CD4-positive, alpha-beta memory T cell (primary cell): ENCODE measurements at regions of chr10 and their contacts with region 1.

Region 1: DNA sequence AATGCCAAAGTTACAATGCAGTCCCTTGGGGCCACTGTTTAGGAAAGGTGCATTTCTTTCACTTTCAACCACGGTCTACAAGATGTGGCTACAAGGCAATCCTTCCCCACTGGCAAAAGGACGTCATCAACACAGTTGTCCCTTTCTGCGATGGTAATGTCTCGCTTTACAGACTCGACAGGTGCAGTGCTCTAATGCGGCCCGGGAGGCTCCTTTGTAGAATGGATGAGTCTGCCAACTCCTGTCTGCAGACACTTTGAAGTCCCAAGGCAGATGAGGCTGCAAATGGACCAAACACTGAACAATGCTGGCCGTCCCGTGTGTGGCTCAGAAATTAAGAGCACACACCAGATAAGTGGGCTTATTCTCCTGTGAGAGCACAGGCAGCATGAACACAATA is 133.7 kb downstream of the PIP4K2A start:
- DNase-seq: no peak
- H3K4me3 ChIP-seq: no peak overlapping the region
- H3K4me3 Mint-ChIP-seq: no peak overlapping the region
- H3K27ac ChIP-seq: no peak overlapping the region
- H3K27ac Mint-ChIP-seq: peak overlapping the region in 3 of 7 donors; percentile 6 to 47 (median 41)
- H3K4me1 ChIP-seq: peaks cover 3% of the 10 kb centered on the region
- H3K4me1 Mint-ChIP-seq: peaks cover 23 to 60% (median 45%) of the 10 kb centered on the region in 4 donors
- H3K27me3 ChIP-seq: no peaks in the 10 kb centered on the region
- H3K27me3 Mint-ChIP-seq: no peaks in the 10 kb centered on the region

Region 2: DNA sequence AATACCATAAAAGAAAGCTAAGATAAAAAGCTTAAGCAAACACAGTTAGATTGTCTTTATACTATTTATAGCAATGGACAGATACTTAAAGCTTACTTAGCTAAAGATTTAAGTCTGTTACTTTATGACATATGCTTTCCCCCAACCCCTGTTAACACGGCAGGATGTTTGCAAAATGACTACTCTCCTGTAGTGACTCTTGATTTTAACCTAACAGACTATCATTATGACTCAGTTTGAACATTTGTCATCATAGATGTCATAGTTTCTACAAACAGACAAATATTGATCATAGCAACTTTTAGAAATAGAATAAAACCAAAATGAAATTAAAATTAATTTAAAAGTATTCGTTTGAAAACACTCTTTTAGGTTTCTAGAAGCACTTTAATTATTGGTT is 272.3 kb before region 1 on chr10:
- CTCF ChIA-PET with region 1: no interaction called
- POLR2A ChIA-PET with region 1: no interaction called
- intact Hi-C with region 1: no loop called
- DNase-seq: no peak
- H3K4me3 ChIP-seq: no peak overlapping the region
- H3K4me3 Mint-ChIP-seq: no peak overlapping the region
- H3K27ac ChIP-seq: no peak overlapping the region
- H3K27ac Mint-ChIP-seq: no peak overlapping the region
- H3K4me1 ChIP-seq: no peaks in the 10 kb centered on the region
- H3K4me1 Mint-ChIP-seq: no peaks in the 10 kb centered on the region
- H3K27me3 ChIP-seq: no peaks in the 10 kb centered on the region
- H3K27me3 Mint-ChIP-seq: peaks cover 0 to 4% of the 10 kb centered on the region in 2 donors

Region 3: GRCh38 chr10:22475651-22476600 is 104.8 kb before region 1 on chr10:
- CTCF ChIA-PET with region 1: no interaction called
- POLR2A ChIA-PET with region 1: no interaction called
- intact Hi-C with region 1: no loop called
- DNase-seq: peak in 4 of 5 donors; percentile 9 to 19 (median 14)
- H3K4me3 ChIP-seq: peak overlapping the region in 1 of 2 donors; percentile 40
- H3K4me3 Mint-ChIP-seq: peak overlapping the region; percentile 74 to 92 (median 88)
- H3K27ac ChIP-seq: no peak overlapping the region
- H3K27ac Mint-ChIP-seq: peak overlapping the region in 1 of 7 donors; percentile 8
- H3K4me1 ChIP-seq: peaks cover 16% of the 10 kb centered on the region
- H3K4me1 Mint-ChIP-seq: peaks cover 5 to 21% (median 12%) of the 10 kb centered on the region in 4 donors
- H3K27me3 ChIP-seq: peaks cover 46% of the 10 kb centered on the region
- H3K27me3 Mint-ChIP-seq: peaks cover 43 to 59% of the 10 kb centered on the region in 2 donors

Region 4: GRCh38 chr10:22597138-22597537 is 16.4 kb after region 1 on chr10:
- CTCF ChIA-PET with region 1: interaction called, 17 read pairs
- POLR2A ChIA-PET with region 1: interaction called, 3 read pairs
- intact Hi-C with region 1: no loop called
- DNase-seq: peak in 4 of 5 donors; percentile 28 to 46 (median 36)
- H3K4me3 ChIP-seq: no peak overlapping the region
- H3K4me3 Mint-ChIP-seq: peak overlapping the region in 7 of 8 donors; percentile 45 to 85 (median 55)
- H3K27ac ChIP-seq: no peak overlapping the region
- H3K27ac Mint-ChIP-seq: peak overlapping the region; percentile 65 to 93 (median 87)
- H3K4me1 ChIP-seq: peaks cover 81% of the 10 kb centered on the region
- H3K4me1 Mint-ChIP-seq: peaks cover 66 to 95% (median 80%) of the 10 kb centered on the region in 4 donors
- H3K27me3 ChIP-seq: no peaks in the 10 kb centered on the region
- H3K27me3 Mint-ChIP-seq: no peaks in the 10 kb centered on the region